Mammary epithelial cell (primary cell): ENCODE measurements at regions of chr10 and their contacts with region 1.

Region 1: DNA sequence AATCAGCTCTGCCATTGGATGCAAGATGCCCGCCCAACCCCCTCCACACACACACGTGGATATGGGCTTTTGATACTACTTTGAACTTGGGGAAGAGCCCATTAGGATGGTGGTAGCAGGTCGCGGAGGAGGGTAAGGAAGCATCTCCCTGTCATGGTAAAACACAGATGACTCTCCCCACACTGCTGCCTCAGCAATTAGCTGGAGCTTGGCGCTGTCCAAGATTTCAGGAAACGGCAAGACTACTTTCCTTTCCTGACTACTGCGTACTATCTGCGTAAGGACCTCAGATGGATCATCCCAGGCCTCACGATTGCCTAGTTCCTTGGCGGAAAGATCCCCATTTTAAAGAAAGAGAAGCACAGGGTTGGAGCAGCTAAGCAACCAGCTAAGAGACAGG is 134.3 kb downstream of the C10orf90 start:
- DNase-seq: no peak
- H3K4me3 ChIP-seq: no peak overlapping the region
- H3K27ac ChIP-seq: no peak overlapping the region
- H3K4me1 ChIP-seq: no peaks in the 10 kb centered on the region
- H3K27me3 ChIP-seq: no peaks in the 10 kb centered on the region
- CTCF ChIP-seq: no peak

Region 2: GRCh38 chr10:126576336-126576735 is 40.2 kb after region 1 on chr10:
- CTCF ChIA-PET with region 1: no interaction called
- dilution Hi-C with region 1: loop called (anchors 5 kb)
- in situ Hi-C with region 1: no loop called
- intact Hi-C with region 1: no loop called
- DNase-seq: no peak
- H3K4me3 ChIP-seq: no peak overlapping the region
- H3K27ac ChIP-seq: no peak overlapping the region
- H3K4me1 ChIP-seq: no peaks in the 10 kb centered on the region
- H3K27me3 ChIP-seq: no peaks in the 10 kb centered on the region
- CTCF ChIP-seq: no peak